ENCODE measurements at regions of chr5 and their contacts with region 1.

Region 1: DNA sequence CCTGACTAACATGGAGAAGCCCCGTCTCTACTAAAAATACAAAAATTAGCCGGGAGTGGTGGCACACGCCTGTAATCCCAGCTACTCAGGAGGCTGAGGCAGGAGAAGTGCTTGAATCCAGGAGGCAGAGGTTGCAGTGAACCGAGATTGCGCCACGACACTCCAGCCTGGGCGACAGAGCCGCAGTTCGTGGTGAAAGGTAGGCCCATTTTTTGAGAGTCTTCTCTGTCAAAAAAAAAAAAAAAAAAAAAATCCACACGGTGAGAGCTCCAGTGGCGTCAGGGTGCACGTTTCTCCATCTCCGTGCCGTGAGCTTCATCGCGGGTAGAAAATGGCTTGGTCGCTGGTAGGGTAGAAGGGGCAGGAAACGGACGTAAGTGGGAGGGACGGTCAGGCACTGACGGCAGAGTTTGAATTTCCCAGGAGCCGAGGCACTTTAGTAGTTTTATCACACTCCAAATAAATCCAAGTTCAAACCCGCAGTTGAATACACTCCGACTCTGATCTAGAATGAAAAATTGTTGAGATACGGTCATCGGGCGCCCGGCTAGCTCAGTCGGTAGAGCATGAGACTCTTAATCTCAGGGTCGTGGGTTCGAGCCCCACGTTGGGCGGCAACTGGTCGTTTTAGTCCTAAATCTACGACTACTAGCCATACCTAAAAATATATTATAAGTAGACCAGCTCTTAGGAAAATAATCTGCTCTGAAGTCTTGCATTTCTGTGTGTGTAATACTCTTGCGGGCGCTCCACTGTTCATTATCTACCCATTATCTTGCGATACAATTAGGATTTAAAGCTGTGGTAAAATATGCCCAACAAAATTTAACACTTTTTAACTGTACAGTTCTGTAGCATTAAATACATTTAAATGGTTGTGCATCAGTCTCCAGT is 2.5 kb upstream of the TRIM7 start:
- DNase-seq: peak; percentile 93
- H3K4me3 ChIP-seq: peak overlapping the region; percentile 72
- H3K27ac ChIP-seq: peak overlapping the region; percentile 85
- H3K4me1 ChIP-seq: peaks cover 6% of the 10 kb centered on the region
- H3K27me3 ChIP-seq: no peaks in the 10 kb centered on the region
- CTCF ChIP-seq: no peak

Region 2: DNA sequence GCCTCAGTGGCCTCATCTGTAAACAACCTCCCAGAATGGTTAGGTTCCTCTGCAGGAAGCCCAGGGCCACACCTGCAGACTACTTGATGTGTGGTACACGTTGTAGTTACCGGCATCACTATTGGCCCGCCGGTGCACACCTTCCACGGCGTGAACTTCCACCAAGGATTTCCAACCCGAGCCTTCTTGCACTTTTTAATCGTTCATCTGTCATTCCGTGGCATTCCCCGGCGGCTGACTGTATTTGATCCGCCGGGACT is 10.3 kb after region 1 on chr5:
- CTCF ChIA-PET with region 1: no interaction called
- POLR2A ChIA-PET with region 1: no interaction called
- intact Hi-C with region 1: loop called (anchors 1 kb)
- DNase-seq: no peak
- H3K4me3 ChIP-seq: peak overlapping the region; percentile 63
- H3K27ac ChIP-seq: no peak overlapping the region
- H3K4me1 ChIP-seq: no peaks in the 10 kb centered on the region
- H3K27me3 ChIP-seq: no peaks in the 10 kb centered on the region
- CTCF ChIP-seq: no peak

Measured in A673 (cell line).